Pancreas (tissue), 10 donors: ENCODE measurements at regions of chr19 and their contacts with region 1.

Region 1: GRCh38 chr19:47296036-47296435 is 13.6 kb upstream of the C5AR1 start:
- DNase-seq: peak in 4 of 6 donors; percentile 59 to 77 (median 72)
- ATAC-seq: peak; percentile 93 to 98 (median 94)
- H3K4me3 ChIP-seq: no peak overlapping the region
- H3K27ac ChIP-seq: no peak overlapping the region
- H3K4me1 ChIP-seq: no peaks in the 10 kb centered on the region
- H3K27me3 ChIP-seq: no peaks in the 10 kb centered on the region
- CTCF ChIP-seq: peak; percentile 55 to 75 (median 62)

Region 2: GRCh38 chr19:47381653-47382279 is 85.7 kb after region 1 on chr19:
- intact Hi-C with region 1: loop called in 1 of 3 experiments (anchors 10 kb)
- DNase-seq: no peak
- ATAC-seq: peak in 2 of 4 donors; percentile 10 to 34
- H3K4me3 ChIP-seq: no peak overlapping the region
- H3K27ac ChIP-seq: no peak overlapping the region
- H3K4me1 ChIP-seq: no peaks in the 10 kb centered on the region
- H3K27me3 ChIP-seq: no peaks in the 10 kb centered on the region
- CTCF ChIP-seq: no peak

Region 3: DNA sequence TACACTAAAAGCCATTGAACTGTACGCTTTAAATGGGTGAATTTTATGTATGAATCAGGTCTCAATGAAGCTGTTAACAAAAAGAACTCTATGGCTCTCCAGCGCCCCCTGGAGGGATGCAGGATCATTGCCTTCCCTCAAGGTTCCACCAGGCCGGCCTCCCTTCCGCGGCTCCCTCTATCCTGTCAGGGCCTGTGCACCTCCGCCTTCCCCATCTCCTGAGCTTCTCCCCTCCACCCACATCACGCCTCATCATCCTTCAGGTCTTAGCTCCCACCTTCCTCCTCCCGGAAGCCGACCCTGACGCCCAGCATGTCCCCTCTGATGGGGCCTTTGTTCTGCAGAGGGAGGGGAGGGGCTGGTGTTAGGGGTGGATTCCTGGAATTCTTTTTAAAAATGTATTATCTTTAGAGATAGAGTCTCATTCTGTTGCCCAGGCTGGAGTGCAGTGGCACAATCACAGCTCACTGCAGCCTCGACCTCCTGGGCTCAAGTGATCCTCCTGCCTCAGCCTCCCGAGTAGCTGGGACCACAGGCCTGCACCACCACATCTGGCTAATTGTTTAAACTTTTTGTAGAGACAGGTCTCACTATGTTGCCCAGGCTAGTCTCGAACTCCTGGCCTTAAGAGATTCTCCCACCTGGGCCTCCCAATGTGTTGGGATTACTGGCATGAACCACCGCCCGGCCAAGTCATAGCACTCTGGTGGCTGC is 95.6 kb after region 1 on chr19:
- intact Hi-C with region 1: loop called in 2 of 3 experiments (anchors 5 to 10 kb)
- DNase-seq: peak; percentile 55 to 92 (median 76)
- ATAC-seq: peak; percentile 64 to 91 (median 88)
- H3K4me3 ChIP-seq: no peak overlapping the region
- H3K27ac ChIP-seq: no peak overlapping the region
- H3K4me1 ChIP-seq: no peaks in the 10 kb centered on the region
- H3K27me3 ChIP-seq: no peaks in the 10 kb centered on the region
- CTCF ChIP-seq: peak; percentile 75 to 93 (median 90)